ENCODE measurements at regions of chr5 and their contacts with region 1.

Region 1: GRCh38 chr5:151740336-151740942 is 18.0 kb downstream of the ATOX1 start:
- DNase-seq: peak; percentile 62 to 70
- H3K4me3 ChIP-seq: no peak overlapping the region
- H3K4me3 Mint-ChIP-seq: no peak overlapping the region
- H3K27ac Mint-ChIP-seq: peak overlapping the region; percentile 51
- H3K4me1 ChIP-seq: peaks cover 15% of the 10 kb centered on the region
- H3K4me1 Mint-ChIP-seq: peaks cover 16% of the 10 kb centered on the region
- H3K27me3 ChIP-seq: no peaks in the 10 kb centered on the region
- H3K27me3 Mint-ChIP-seq: no peaks in the 10 kb centered on the region
- CTCF ChIP-seq: peak; percentile 82 to 94

Region 2: DNA sequence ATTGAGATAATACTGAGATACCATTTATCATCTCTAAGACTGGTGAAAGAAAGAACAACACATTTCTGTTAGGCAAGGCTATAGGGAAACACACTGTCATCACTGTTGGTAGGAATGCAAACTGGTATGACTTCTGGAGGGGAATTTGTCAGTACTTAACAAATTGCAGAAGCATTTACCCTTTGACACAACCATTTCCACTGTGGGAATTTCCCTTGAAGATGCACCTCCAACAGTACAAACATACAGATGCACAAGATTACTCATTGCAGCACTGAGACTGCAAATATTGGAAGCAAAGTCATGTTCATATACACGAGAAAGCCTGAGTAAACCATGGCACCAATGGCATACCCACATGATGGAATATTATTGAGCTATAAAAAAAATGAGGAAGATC is 469.8 kb before region 1 on chr5:
- CTCF ChIA-PET with region 1: no interaction called
- POLR2A ChIA-PET with region 1: no interaction called
- intact Hi-C with region 1: no loop called
- DNase-seq: no peak
- H3K4me3 ChIP-seq: no peak overlapping the region
- H3K4me3 Mint-ChIP-seq: no peak overlapping the region
- H3K27ac Mint-ChIP-seq: no peak overlapping the region
- H3K4me1 ChIP-seq: peaks cover 21% of the 10 kb centered on the region
- H3K4me1 Mint-ChIP-seq: peaks cover 7% of the 10 kb centered on the region
- H3K27me3 ChIP-seq: no peaks in the 10 kb centered on the region
- H3K27me3 Mint-ChIP-seq: no peaks in the 10 kb centered on the region
- CTCF ChIP-seq: no peak

Region 3: GRCh38 chr5:151523335-151523734 is 217.1 kb before region 1 on chr5:
- CTCF ChIA-PET with region 1: no interaction called
- POLR2A ChIA-PET with region 1: no interaction called
- intact Hi-C with region 1: loop called (anchors 2 kb)
- DNase-seq: peak; percentile 55 to 59
- H3K4me3 ChIP-seq: no peak overlapping the region
- H3K4me3 Mint-ChIP-seq: no peak overlapping the region
- H3K27ac Mint-ChIP-seq: no peak overlapping the region
- H3K4me1 ChIP-seq: no peaks in the 10 kb centered on the region
- H3K4me1 Mint-ChIP-seq: no peaks in the 10 kb centered on the region
- H3K27me3 ChIP-seq: no peaks in the 10 kb centered on the region
- H3K27me3 Mint-ChIP-seq: no peaks in the 10 kb centered on the region
- CTCF ChIP-seq: peak; percentile 67 to 71

Region 4: GRCh38 chr5:151699071-151699901 is 41.2 kb before region 1 on chr5:
- CTCF ChIA-PET with region 1: interaction called, 4 read pairs
- POLR2A ChIA-PET with region 1: no interaction called
- intact Hi-C with region 1: loop called (anchors 5 kb)
- DNase-seq: peak; percentile 56 to 72
- H3K4me3 ChIP-seq: no peak overlapping the region
- H3K4me3 Mint-ChIP-seq: peak overlapping the region; percentile 30
- H3K27ac Mint-ChIP-seq: peak overlapping the region; percentile 83
- H3K4me1 ChIP-seq: peaks cover 35% of the 10 kb centered on the region
- H3K4me1 Mint-ChIP-seq: peaks cover 26% of the 10 kb centered on the region
- H3K27me3 ChIP-seq: no peaks in the 10 kb centered on the region
- H3K27me3 Mint-ChIP-seq: no peaks in the 10 kb centered on the region
- CTCF ChIP-seq: no peak

Region 5: DNA sequence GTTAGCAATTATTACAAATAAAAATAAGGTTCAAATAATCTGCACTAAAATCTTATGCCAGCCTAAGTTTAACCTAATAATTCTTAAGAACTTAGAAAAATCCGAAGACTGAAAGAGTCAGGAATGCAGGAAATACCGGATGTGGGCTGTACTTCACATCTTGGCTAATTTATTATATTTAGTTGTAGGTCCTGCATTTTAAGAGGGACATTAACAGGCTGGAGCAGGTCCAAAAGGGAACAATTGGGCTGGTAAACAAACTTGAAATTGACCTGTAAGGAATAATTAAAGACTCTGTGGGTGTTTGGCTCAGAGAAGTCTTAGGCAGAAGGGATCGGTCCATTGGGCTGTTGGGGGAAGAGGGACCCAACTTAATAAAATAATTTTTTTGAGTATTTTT is 165.8 kb after region 1 on chr5:
- CTCF ChIA-PET with region 1: no interaction called
- POLR2A ChIA-PET with region 1: no interaction called
- intact Hi-C with region 1: no loop called
- DNase-seq: no peak
- H3K4me3 ChIP-seq: no peak overlapping the region
- H3K4me3 Mint-ChIP-seq: no peak overlapping the region
- H3K27ac Mint-ChIP-seq: no peak overlapping the region
- H3K4me1 ChIP-seq: no peaks in the 10 kb centered on the region
- H3K4me1 Mint-ChIP-seq: no peaks in the 10 kb centered on the region
- H3K27me3 ChIP-seq: no peaks in the 10 kb centered on the region
- H3K27me3 Mint-ChIP-seq: peaks cover 17% of the 10 kb centered on the region
- CTCF ChIP-seq: no peak

Measured in Caco-2 (cell line).